ENCODE measurements at regions of chr13 and their contacts with region 1.

Region 1: DNA sequence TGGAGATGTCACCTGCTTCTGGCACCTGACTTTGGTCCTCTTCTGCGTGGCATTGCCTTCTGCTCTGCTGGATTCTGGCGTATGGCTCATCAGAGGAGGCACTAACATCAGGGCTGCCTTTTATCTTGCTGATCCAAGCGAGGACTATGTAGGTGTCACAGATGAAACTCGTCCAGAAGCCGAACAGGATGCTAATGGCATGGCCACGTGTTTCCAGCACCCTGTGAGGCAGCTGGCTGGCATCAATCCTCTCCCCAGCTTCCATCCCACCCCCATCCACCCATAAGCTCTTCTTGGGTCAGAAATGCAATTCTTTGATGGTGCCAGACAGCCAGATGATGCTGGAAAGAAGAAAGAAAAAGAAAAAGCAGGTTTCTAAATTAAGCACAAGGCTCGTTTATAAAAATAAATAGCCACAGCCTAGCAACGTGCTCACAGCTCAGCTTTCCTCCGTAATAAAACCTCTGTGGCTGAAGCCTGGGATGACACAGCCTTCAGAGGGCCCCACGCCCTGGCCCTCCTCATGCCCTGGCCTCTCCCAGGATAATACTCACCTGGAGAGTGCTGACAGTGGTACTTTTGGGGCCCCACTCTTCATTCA is 212.9 kb upstream of the SERP2 start:
- DNase-seq: no peak
- H3K4me3 Mint-ChIP-seq: no peak overlapping the region
- H3K27ac Mint-ChIP-seq: peak overlapping the region; percentile 98
- H3K4me1 Mint-ChIP-seq: peaks cover 21% of the 10 kb centered on the region
- H3K27me3 Mint-ChIP-seq: no peaks in the 10 kb centered on the region
- CTCF ChIP-seq: no peak

Region 2: DNA sequence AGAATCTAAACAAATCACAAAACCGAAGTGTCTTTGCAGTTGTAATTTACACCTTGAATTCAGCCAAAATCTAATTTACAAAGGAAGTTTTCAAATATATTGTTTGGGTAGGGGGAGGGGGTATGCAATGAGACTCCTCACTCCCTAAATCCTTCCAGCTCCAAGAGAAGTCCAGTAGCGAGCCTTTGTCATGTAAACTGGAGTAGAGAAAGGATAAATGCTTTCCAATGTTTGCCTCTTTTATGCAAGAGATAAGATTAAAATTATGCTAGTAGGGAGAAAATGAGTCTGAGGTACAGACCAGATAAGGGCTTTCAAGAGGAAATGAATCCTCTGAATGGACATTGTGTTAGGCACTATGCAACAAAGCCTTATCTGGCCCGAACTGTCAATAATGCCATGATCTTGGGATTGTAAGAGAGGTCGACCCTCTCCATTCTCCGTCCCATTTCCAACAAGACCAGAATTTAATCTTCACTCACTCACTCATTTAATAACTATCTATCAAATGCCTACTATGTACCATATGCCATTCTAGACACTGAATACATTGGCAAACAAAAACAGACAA is 81.8 kb before region 1 on chr13:
- CTCF ChIA-PET with region 1: no interaction called
- POLR2A ChIA-PET with region 1: no interaction called
- intact Hi-C with region 1: no loop called
- DNase-seq: no peak
- H3K4me3 Mint-ChIP-seq: no peak overlapping the region
- H3K27ac Mint-ChIP-seq: no peak overlapping the region
- H3K4me1 Mint-ChIP-seq: no peaks in the 10 kb centered on the region
- H3K27me3 Mint-ChIP-seq: no peaks in the 10 kb centered on the region
- CTCF ChIP-seq: no peak

Region 3: DNA sequence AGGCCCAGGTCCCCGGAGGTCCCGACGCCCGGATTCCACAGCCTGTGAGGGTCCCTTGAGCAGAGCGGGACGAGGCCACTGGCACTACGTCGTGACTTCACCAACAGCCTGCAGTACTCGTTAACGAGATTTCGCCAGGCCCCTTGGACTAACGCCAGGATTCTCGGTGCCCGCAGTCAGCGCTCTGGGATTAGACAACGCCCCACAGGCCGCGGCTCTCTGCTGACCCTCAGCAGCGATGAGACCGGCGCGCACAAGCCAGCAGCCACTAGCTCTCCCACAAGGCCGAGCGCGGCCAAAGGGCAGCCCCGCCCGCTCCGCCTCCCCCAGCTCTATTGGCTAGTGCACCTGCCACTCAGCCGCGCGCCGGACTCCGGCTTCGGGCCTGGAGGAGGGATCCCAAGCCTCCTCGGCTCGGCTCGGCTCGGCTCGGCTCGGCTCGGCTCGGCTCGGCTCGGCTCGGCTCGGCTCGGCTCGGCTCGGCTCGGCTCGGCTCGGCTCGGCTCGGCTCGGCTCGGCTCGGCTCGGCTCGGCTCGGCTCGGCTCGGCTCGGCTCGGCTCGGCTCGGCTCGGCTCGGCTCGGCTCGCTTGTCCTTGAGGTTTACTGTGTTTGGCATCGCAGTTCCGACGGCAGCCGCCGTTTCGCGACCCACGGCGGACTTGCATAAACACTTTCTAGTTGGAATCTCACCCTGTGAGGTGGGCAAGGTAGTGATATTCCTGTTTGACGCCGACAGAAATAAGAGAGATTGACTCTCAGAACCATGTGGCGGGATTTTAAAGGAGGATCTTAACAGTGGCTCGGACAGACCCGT is 18.8 kb before region 1 on chr13:
- CTCF ChIA-PET with region 1: no interaction called
- POLR2A ChIA-PET with region 1: interaction called, 22 read pairs
- intact Hi-C with region 1: no loop called
- DNase-seq: peak; percentile 97
- H3K4me3 Mint-ChIP-seq: peak overlapping the region; percentile 91
- H3K27ac Mint-ChIP-seq: peak overlapping the region; percentile 100
- H3K4me1 Mint-ChIP-seq: peaks cover 14% of the 10 kb centered on the region
- H3K27me3 Mint-ChIP-seq: no peaks in the 10 kb centered on the region
- CTCF ChIP-seq: no peak

Region 4: GRCh38 chr13:44172425-44172824 is 11.7 kb after region 1 on chr13:
- CTCF ChIA-PET with region 1: interaction called, 4 read pairs
- POLR2A ChIA-PET with region 1: interaction called, 10 read pairs
- intact Hi-C with region 1: no loop called
- DNase-seq: no peak
- H3K4me3 Mint-ChIP-seq: no peak overlapping the region
- H3K27ac Mint-ChIP-seq: no peak overlapping the region
- H3K4me1 Mint-ChIP-seq: peaks cover 15% of the 10 kb centered on the region
- H3K27me3 Mint-ChIP-seq: no peaks in the 10 kb centered on the region
- CTCF ChIP-seq: no peak

Region 5: GRCh38 chr13:44231786-44232516 is 71.3 kb after region 1 on chr13:
- CTCF ChIA-PET with region 1: no interaction called
- POLR2A ChIA-PET with region 1: interaction called, 13 read pairs
- intact Hi-C with region 1: no loop called
- DNase-seq: peak; percentile 99
- H3K4me3 Mint-ChIP-seq: peak overlapping the region; percentile 34
- H3K27ac Mint-ChIP-seq: peak overlapping the region; percentile 86
- H3K4me1 Mint-ChIP-seq: peaks cover 28% of the 10 kb centered on the region
- H3K27me3 Mint-ChIP-seq: no peaks in the 10 kb centered on the region
- CTCF ChIP-seq: no peak

Region 6: DNA sequence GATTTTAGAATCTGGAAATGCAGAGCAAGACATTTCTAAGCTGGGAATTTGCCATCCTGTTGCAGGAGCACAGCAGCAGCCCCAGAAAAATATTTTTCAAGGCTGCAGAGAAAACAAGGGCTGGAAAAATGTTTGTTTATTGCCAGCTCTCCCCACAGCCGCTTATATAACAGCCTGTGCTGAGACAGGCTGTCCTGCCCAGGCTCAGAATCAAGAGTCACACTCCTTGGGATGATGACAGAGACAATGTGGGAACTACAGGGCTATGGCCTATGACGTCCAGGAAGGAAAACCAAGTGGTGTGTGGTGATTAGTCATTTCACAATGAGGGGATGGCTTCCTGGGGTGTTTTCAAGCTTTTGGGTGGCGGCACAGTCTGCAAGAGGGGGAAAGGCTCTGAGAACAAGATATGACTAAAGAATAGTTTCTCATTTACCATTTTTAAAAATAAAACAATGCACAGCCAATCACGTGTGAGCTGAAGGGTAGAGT is 76.6 kb after region 1 on chr13:
- CTCF ChIA-PET with region 1: no interaction called
- POLR2A ChIA-PET with region 1: interaction called, 13 read pairs
- intact Hi-C with region 1: no loop called
- DNase-seq: peak; percentile 95
- H3K4me3 Mint-ChIP-seq: no peak overlapping the region
- H3K27ac Mint-ChIP-seq: peak overlapping the region; percentile 37
- H3K4me1 Mint-ChIP-seq: peaks cover 25% of the 10 kb centered on the region
- H3K27me3 Mint-ChIP-seq: no peaks in the 10 kb centered on the region
- CTCF ChIP-seq: no peak

Measured in MCF 10A (cell line).